Right ventricle myocardium superior (tissue), 1 donor: ENCODE measurements at regions of chr12 and their contacts with region 1.

Region 1: GRCh38 chr12:55073043-55074022 is 52.9 kb upstream of the OR9K2 start:
- DNase-seq: peak; percentile 74
- ATAC-seq: peak; percentile 79

Region 2: DNA sequence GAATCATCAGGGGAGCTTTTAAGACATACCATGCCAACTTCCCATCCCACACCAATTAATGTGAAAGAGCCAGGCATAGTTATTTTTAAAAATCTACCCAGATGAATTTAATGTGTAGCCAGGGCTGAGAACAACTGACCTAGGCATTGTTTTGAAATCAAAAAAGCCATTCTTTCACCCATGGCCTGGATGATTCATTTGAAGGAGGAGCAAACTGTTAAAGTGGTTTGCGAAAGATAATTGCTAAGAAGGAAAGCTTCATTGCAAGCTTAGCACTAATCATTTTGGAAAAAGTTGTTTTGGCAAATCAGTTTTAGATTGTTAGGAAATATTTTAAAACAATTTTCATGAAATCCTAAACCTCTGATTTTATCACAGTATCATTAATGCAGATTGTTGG is 597.8 kb before region 1 on chr12:
- intact Hi-C with region 1: no loop called
- DNase-seq: no peak
- ATAC-seq: no peak

Region 3: DNA sequence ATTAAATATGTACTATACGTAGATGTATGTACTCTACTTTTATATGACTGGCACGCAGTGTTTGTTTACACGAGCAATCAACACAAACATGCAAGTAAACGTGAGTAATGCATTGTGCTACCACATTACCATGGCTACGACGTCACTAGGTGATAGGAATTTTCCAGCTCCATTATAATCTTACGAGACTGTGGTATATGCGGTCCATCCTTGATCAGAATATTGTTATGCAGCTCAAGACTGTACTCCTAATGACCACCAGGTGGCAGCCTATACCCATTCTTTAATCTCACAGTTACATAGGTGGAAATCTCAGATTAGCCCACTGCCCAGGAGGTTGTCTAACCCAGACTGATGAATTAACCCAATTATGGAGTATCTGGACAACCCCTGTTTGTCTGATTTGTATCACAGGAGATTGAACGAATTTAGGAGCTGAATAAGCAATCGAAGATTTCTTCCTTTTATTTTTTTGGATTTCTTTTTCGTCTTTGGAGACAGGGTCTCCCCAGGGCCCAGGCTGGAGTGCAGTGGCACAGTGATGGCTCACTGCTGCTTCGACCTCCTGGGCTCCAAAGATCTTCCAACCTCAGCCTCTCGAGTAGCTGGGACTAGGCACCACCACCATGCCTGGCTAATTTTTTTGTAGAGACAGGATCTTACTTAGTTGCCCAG is 80.0 kb before region 1 on chr12:
- intact Hi-C with region 1: loop called (anchors 5 kb)
- DNase-seq: no peak
- ATAC-seq: peak; percentile 69

Region 4: GRCh38 chr12:55112378-55112777 is 39.0 kb after region 1 on chr12:
- intact Hi-C with region 1: no loop called
- DNase-seq: no peak
- ATAC-seq: no peak